GM18951 (cell line): ENCODE measurements at regions of chrX and their contacts with region 1.

Region 1: GRCh38 chrX:2614911-2615310 is 76.2 kb upstream of the CD99 start:
- POLR2A ChIP-seq: no peak

Region 2: DNA sequence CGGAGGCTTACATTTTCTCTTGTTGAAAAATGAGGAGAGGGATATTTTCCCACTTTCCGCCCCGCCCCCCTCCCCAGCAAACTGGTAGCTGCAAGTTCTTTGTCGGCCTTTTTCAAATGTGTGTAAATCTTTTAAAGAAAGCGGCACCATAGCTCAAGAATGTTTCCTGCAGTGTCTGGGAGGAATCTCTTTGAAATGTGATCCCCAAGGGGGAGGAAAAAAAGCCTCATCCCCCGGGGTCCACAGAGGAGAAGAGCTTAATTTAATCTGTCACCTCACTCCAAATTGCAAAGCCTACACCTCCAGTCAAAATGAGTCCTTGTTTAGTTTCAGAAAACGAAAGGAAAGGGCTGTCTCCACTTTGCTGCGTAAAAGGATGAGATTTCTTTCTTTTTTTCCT is 965.3 kb before region 1 on chrX:
- in situ Hi-C with region 1: loop called (anchors 5 kb)
- POLR2A ChIP-seq: no peak

Region 3: DNA sequence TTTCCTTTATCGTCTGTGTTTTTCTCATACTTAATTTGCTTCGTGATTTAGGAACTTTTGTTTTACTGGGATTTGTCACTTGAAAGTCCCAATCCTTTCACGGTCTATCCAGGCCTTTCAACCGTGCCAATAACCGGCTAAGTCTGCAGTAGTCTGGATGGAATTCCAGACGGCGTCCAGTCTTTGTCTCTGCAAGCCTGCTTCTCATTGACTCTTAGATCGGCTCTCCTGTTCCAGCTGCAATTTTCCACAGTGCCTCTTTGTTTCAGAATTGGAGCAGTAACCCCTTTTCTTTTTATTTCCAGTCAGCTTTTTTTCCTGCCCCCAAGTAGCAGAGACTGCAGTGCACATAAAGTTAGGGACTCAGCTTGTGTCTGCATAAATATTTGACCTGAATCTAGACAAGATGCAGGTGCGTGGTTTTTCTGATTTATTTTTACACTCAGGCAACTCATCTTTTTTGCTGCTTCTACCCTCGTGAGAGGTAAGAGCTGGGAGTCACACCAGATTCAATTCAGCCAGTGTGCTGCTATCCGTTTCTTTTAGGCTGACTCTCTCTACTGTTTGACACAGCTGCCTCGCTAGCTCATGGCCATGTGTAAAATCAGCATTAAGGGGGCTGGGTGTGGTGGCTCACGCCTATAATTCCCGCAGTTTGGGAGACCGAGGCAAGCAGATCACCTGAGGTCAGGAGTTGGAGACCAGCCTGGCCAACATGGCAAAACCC is 76.7 kb before region 1 on chrX:
- in situ Hi-C with region 1: no loop called
- POLR2A ChIP-seq: no peak